Adrenal gland (tissue), 19 donors: ENCODE measurements at regions of chr12 and their contacts with region 1.

Region 1: GRCh38 chr12:113462117-113462774 is 9.4 kb downstream of the LHX5 start:
- DNase-seq: peak; percentile 74 to 92 (median 84)
- H3K4me3 ChIP-seq: peak overlapping the region in 1 of 4 donors; percentile 45
- H3K27ac ChIP-seq: no peak overlapping the region
- H3K4me1 ChIP-seq: peaks cover 23 to 32% of the 10 kb centered on the region in 2 donors
- H3K27me3 ChIP-seq: peaks cover 57% of the 10 kb centered on the region
- CTCF ChIP-seq: peak; percentile 67 to 87 (median 76)
- POLR2A ChIP-seq: no peak

Region 2: GRCh38 chr12:113378291-113378690 is 84.0 kb before region 1 on chr12:
- intact Hi-C with region 1: no loop called
- DNase-seq: no peak
- H3K4me3 ChIP-seq: no peak overlapping the region
- H3K27ac ChIP-seq: peak overlapping the region in 1 of 5 donors; percentile 8
- H3K4me1 ChIP-seq: no peaks in the 10 kb centered on the region
- H3K27me3 ChIP-seq: no peaks in the 10 kb centered on the region
- CTCF ChIP-seq: peak in 3 of 6 experiments; percentile 11 to 23 (median 15)
- POLR2A ChIP-seq: no peak

Region 3: GRCh38 chr12:113912760-113913329 is 450.6 kb after region 1 on chr12:
- intact Hi-C with region 1: loop called (anchors 2 to 5 kb)
- DNase-seq: peak; percentile 49 to 92 (median 74)
- H3K4me3 ChIP-seq: no peak overlapping the region
- H3K27ac ChIP-seq: no peak overlapping the region
- H3K4me1 ChIP-seq: no peaks in the 10 kb centered on the region
- H3K27me3 ChIP-seq: no peaks in the 10 kb centered on the region
- CTCF ChIP-seq: peak; percentile 76 to 89 (median 84)
- POLR2A ChIP-seq: no peak